ENCODE measurements at regions of chr12 and their contacts with region 1.

Region 1: GRCh38 chr12:52667511-52667910 is 12.7 kb downstream of the KRT1 start:
- DNase-seq: no peak
- ATAC-seq: no peak

Region 2: DNA sequence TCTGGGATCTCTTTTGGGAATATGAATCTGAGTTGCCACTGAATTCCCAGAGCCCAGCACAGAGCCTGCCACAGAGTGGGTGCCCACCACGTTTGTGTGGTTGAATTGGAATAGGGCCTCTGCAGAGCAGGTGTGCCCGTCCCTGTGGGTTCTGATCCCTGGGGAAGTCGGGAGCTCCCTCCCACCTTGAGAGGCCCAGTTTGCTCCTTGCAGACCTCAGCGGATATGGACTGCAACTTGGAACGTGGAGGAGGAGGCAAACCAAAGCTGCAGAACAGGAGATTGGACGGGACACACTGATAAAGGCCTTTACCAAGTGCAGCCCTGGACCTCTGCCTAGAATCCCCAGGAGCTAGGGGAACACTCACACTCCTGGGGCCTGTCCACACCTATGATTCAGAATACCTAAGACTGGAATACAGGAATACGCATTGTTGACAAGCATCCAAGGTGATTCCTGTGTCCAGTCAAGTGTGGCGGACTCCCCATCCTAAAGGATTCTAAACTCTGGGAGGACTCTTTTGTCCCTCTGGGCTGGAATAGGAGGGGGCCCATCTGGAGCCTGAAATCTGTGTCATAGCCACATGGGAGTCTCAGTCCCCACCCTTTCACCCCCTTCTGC is 107.2 kb after region 1 on chr12:
- intact Hi-C with region 1: no loop called
- DNase-seq: no peak
- ATAC-seq: no peak

Region 3: DNA sequence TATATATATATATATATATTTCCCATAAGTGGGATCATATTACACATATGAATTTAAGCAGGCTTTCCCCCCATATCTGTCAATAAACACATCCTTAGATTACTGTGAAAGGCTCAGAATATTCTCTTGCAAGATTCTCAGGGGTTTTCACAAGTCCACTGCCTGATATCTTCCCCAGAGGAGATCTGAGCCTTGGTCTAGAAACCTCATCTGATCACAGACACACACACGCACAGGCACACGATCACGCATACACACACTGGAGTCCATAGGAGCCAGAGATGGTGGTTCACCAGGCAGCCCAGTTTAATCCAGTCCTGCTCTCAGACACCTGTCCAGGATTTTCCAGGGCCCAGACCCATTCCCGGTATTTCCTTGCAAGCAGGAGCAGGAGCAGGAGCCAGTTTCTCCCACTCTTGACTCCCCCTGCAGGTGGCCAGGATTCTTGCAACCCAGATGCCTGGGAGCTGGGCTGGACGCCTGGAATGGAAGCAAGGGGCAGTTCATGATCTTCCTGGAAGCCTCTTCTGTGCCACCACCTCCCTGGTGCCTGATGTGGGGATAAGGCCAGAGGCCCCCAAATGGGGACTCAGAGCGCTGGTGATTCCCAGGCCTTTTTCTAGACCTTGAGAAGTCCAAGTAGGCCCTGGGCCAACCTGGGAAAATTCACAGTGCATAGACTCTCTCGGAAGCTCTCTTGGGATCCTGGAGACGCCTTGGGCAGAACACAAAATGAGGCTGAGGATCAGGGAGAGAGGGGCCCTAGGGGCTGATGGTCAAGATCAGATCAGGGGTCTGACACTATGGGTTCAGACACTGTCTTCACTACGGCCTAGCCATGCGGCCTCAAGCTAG is 197.8 kb after region 1 on chr12:
- intact Hi-C with region 1: loop called (anchors 10 kb)
- DNase-seq: peak; percentile 63
- ATAC-seq: peak; percentile 74

Measured in Right ventricle myocardium superior (tissue), 1 donor.